Gastrocnemius medialis (tissue), 4 donors: ENCODE measurements at regions of chr15 and their contacts with region 1.

Region 1: DNA sequence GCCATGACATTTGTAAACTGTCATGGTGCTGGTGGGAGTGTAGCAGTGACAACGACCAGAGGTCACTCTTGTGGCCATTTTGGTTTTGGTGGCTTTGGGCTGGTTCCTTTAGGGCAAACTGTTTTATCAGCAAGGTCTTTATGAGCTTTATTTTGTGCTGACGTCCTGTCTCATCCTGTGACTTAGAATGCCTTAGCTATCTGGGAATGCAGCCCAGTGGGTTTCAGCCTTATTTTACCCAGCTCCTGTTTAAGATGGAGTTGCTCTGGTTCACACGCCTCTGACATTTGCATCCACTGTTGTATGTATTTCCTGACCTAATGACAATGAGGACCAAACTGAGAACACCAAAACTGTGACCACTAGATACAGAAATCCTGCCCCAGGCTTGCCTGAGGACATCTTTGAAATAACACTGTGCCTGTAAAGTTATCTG is 37.6 kb downstream of the RAB8B start:
- DNase-seq: no peak
- ATAC-seq: no peak
- H3K4me3 ChIP-seq: no peak overlapping the region
- H3K27ac ChIP-seq: no peak overlapping the region
- H3K4me1 ChIP-seq: peaks cover under 1 to 6% of the 10 kb centered on the region in 2 donors
- H3K27me3 ChIP-seq: no peaks in the 10 kb centered on the region
- CTCF ChIP-seq: no peak
- POLR2A ChIP-seq: no peak

Region 2: GRCh38 chr15:63089260-63090043 is 137.5 kb before region 1 on chr15:
- in situ Hi-C with region 1: no loop called
- intact Hi-C with region 1: no loop called
- DNase-seq: peak in 1 of 2 donors; percentile 18
- ATAC-seq: peak in 1 of 2 donors; percentile 47
- H3K4me3 ChIP-seq: no peak overlapping the region
- H3K27ac ChIP-seq: peak overlapping the region; percentile 14 to 41 (median 26)
- H3K4me1 ChIP-seq: peaks cover 0 to 4% of the 10 kb centered on the region in 2 donors
- H3K27me3 ChIP-seq: no peaks in the 10 kb centered on the region
- CTCF ChIP-seq: no peak
- POLR2A ChIP-seq: no peak

Region 3: GRCh38 chr15:63178030-63178429 is 49.0 kb before region 1 on chr15:
- in situ Hi-C with region 1: no loop called
- intact Hi-C with region 1: loop called (anchors 5 kb)
- DNase-seq: no peak
- ATAC-seq: no peak
- H3K4me3 ChIP-seq: no peak overlapping the region
- H3K27ac ChIP-seq: no peak overlapping the region
- H3K4me1 ChIP-seq: peaks cover 3 to 6% of the 10 kb centered on the region in 2 donors
- H3K27me3 ChIP-seq: no peaks in the 10 kb centered on the region
- CTCF ChIP-seq: no peak
- POLR2A ChIP-seq: no peak

Region 4: GRCh38 chr15:63712828-63713520 is 486.0 kb after region 1 on chr15:
- in situ Hi-C with region 1: no loop called
- intact Hi-C with region 1: no loop called
- DNase-seq: no peak
- ATAC-seq: no peak
- H3K4me3 ChIP-seq: no peak overlapping the region
- H3K27ac ChIP-seq: no peak overlapping the region
- H3K4me1 ChIP-seq: peaks cover 0 to 5% of the 10 kb centered on the region in 2 donors
- H3K27me3 ChIP-seq: no peaks in the 10 kb centered on the region
- CTCF ChIP-seq: no peak
- POLR2A ChIP-seq: no peak